HCT116 (cell line): ENCODE measurements at regions of chr4 and their contacts with region 1.

Region 1: GRCh38 chr4:36351082-36351666 is 69.8 kb downstream of the DTHD1 start:
- DNase-seq: peak; percentile 36
- ATAC-seq: peak; percentile 85
- H3K4me3 ChIP-seq: no peak overlapping the region
- H3K27ac ChIP-seq: no peak overlapping the region
- H3K4me1 ChIP-seq: peaks cover 0 to 4% of the 10 kb centered on the region in 2 experiments; a peak in 1 of 4 replicates
- H3K27me3 ChIP-seq: no peaks in the 10 kb centered on the region
- CTCF ChIP-seq: peak; percentile 63 to 75 (median 71)
- POLR2A ChIP-seq: no peak
- RAD21 ChIP-seq: peak; percentile 76

Region 2: DNA sequence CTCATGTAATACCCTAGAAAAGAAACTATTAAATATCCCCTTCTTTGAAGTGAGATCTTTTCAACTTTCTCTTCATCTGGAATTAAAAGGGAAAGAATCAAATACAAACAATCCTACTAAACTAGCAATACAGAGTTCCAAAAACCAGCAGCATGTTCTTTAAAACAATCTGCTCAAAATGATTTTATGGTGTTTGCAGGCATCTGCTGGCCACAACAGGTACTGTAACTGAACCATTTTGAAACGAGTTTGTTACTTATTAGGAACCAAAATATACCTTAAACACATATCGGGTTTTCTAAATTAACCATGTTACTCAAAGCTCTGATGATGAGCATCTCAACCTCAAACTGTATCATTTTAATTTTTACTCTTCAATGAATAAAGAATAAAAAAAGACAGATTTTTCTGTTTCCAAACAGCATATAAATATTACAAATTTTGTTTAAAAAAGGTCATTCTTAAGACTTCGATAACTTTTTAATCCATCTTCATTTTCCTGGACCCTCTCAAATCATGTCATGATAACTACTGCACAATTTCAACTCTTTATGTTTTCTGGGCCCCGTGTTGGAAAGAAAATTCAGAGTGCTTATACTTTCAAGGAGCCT is 163.3 kb before region 1 on chr4:
- CTCF ChIA-PET with region 1: no interaction called
- POLR2A ChIA-PET with region 1: no interaction called
- RAD21 ChIA-PET with region 1: no interaction called
- intact Hi-C with region 1: no loop called
- DNase-seq: peak; percentile 3
- ATAC-seq: no peak
- H3K4me3 ChIP-seq: no peak overlapping the region
- H3K27ac ChIP-seq: no peak overlapping the region
- H3K4me1 ChIP-seq: no peaks in the 10 kb centered on the region
- H3K27me3 ChIP-seq: no peaks in the 10 kb centered on the region
- CTCF ChIP-seq: peak; percentile 10 to 68 (median 45); a peak in 3 of 6 replicates
- POLR2A ChIP-seq: no peak
- RAD21 ChIP-seq: peak; percentile 58

Region 3: DNA sequence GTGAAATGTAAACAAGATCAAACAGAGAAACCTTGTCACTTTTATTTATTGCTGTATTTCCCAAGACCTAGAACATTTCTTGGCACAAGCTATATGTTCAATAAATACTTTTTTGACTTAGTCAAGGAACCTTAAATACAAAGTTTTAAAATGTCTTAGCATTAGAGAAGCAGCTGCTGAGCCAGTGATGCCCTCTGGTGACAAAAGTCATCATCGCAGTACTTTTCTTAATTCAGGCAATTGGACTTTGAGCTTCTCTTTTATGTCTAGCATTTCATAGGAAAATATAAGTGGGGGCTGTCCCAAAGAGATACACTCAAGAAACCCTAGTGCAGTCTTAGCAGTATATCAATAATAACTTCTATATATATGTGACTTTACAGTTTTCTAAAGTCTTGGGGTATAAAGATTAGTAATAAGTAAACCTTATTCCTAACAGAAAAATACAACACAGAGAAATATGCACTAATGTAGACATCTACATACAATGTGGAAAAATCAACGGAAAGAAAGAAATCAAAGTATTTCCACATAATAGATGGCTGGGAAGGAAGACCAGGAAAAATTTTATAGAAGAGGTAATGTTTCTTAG is 48.7 kb after region 1 on chr4:
- CTCF ChIA-PET with region 1: interaction called, 10 read pairs
- POLR2A ChIA-PET with region 1: no interaction called
- RAD21 ChIA-PET with region 1: interaction called in 1 of 2 experiments, 4 read pairs
- intact Hi-C with region 1: loop called (anchors 1 kb)
- DNase-seq: no peak
- ATAC-seq: peak; percentile 65
- H3K4me3 ChIP-seq: no peak overlapping the region
- H3K27ac ChIP-seq: no peak overlapping the region
- H3K4me1 ChIP-seq: peaks cover under 1 to 9% of the 10 kb centered on the region in 2 experiments; a peak in 1 of 4 replicates
- H3K27me3 ChIP-seq: no peaks in the 10 kb centered on the region
- CTCF ChIP-seq: peak; percentile 61 to 86 (median 66); a peak in 5 of 6 replicates
- POLR2A ChIP-seq: no peak
- RAD21 ChIP-seq: peak; percentile 77

Region 4: GRCh38 chr4:37389967-37390580 is 1038.9 kb after region 1 on chr4:
- CTCF ChIA-PET with region 1: interaction called, 3 read pairs
- POLR2A ChIA-PET with region 1: no interaction called
- RAD21 ChIA-PET with region 1: no interaction called
- intact Hi-C with region 1: loop called (anchors 1 kb)
- DNase-seq: peak; percentile 48
- ATAC-seq: peak; percentile 80
- H3K4me3 ChIP-seq: no peak overlapping the region
- H3K27ac ChIP-seq: no peak overlapping the region
- H3K4me1 ChIP-seq: peaks cover 0 to 14% of the 10 kb centered on the region in 2 experiments; a peak in 2 of 4 replicates
- H3K27me3 ChIP-seq: no peaks in the 10 kb centered on the region
- CTCF ChIP-seq: peak; percentile 45 to 69 (median 60); a peak in 5 of 6 replicates
- POLR2A ChIP-seq: no peak
- RAD21 ChIP-seq: peak; percentile 81